ENCODE measurements at regions of chr1 and their contacts with region 1.

Region 1: DNA sequence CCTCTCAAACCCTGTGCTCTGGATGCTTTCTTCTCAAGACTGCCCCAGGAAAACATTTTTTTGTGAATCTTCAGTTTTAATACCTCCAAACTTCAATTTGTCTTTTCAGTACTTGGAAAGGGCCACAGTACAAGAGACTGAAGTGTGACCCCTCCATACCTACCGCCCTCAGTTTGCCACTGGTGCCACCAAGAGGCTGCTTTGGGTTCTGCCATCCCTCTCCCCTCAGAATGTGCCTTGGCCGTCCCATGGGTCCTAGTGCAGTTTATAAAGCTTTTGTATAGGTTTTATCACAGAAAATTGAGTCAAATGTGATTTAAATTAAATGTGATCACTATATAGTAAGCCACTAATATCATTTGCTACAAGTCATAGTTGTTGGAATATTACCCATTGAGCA is 60.8 kb upstream of the PGD start:
- DNase-seq: peak in 5 of 9 donors; percentile 1 to 27 (median 9)
- ATAC-seq: no peak
- H3K4me3 ChIP-seq: no peak overlapping the region
- H3K4me3 Mint-ChIP-seq: no peak overlapping the region
- H3K27ac ChIP-seq: no peak overlapping the region
- H3K27ac Mint-ChIP-seq: no peak overlapping the region
- H3K4me1 ChIP-seq: no peaks in the 10 kb centered on the region
- H3K4me1 Mint-ChIP-seq: no peaks in the 10 kb centered on the region
- H3K27me3 ChIP-seq: no peaks in the 10 kb centered on the region
- H3K27me3 Mint-ChIP-seq: no peaks in the 10 kb centered on the region

Region 2: DNA sequence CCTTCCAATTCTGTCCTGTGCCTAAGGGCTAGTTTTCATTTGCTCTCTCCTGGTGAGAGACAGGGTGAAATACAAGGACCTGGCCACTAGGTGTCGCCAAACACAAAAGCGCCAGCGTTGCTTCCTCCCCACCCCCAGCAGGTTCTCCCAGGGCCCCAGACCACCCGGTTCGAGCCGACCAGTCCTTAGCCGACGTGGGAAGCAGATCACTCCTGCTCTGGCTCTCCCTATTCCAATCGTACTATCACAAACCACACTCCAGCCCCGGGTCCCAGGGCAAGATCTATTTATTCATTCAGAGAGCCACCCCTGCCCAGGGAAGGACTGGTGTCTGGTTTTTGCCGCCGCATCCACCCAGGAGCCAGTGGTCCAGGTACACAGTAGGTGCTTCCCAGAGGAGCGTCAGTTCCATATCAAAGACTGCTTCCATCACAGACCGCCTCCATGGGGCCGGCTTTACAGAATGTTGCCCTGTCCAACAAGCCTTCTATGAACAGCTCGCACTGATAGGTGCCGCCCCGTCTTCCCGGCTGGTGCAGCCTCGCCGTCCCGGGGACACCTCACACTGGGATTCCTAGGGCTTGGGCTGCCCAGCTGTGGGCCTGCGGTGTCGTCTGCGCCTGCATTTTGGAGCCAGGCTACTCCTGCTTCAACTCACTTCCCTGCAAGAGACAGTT is 462.9 kb before region 1 on chr1:
- CTCF ChIA-PET with region 1: no interaction called
- POLR2A ChIA-PET with region 1: no interaction called
- intact Hi-C with region 1: loop called in 1 of 2 experiments (anchors 5 kb)
- DNase-seq: peak; percentile 54 to 73 (median 64)
- ATAC-seq: peak; percentile 93
- H3K4me3 ChIP-seq: no peak overlapping the region
- H3K4me3 Mint-ChIP-seq: peak overlapping the region in 1 of 10 donors; percentile 14
- H3K27ac ChIP-seq: no peak overlapping the region
- H3K27ac Mint-ChIP-seq: peak overlapping the region in 3 of 9 donors; percentile 16 to 23 (median 16)
- H3K4me1 ChIP-seq: no peaks in the 10 kb centered on the region
- H3K4me1 Mint-ChIP-seq: peaks cover 6 to 9% (median 7%) of the 10 kb centered on the region in 7 donors
- H3K27me3 ChIP-seq: no peaks in the 10 kb centered on the region
- H3K27me3 Mint-ChIP-seq: no peaks in the 10 kb centered on the region

Region 3: GRCh38 chr1:9957726-9958125 is 380.3 kb before region 1 on chr1:
- CTCF ChIA-PET with region 1: no interaction called
- POLR2A ChIA-PET with region 1: no interaction called
- intact Hi-C with region 1: loop called in 1 of 2 experiments (anchors 5 kb)
- DNase-seq: no peak
- ATAC-seq: no peak
- H3K4me3 ChIP-seq: no peak overlapping the region
- H3K4me3 Mint-ChIP-seq: no peak overlapping the region
- H3K27ac ChIP-seq: no peak overlapping the region
- H3K27ac Mint-ChIP-seq: no peak overlapping the region
- H3K4me1 ChIP-seq: no peaks in the 10 kb centered on the region
- H3K4me1 Mint-ChIP-seq: peaks cover 0 to 4% (median 0%) of the 10 kb centered on the region in 7 donors
- H3K27me3 ChIP-seq: no peaks in the 10 kb centered on the region
- H3K27me3 Mint-ChIP-seq: no peaks in the 10 kb centered on the region

Region 4: DNA sequence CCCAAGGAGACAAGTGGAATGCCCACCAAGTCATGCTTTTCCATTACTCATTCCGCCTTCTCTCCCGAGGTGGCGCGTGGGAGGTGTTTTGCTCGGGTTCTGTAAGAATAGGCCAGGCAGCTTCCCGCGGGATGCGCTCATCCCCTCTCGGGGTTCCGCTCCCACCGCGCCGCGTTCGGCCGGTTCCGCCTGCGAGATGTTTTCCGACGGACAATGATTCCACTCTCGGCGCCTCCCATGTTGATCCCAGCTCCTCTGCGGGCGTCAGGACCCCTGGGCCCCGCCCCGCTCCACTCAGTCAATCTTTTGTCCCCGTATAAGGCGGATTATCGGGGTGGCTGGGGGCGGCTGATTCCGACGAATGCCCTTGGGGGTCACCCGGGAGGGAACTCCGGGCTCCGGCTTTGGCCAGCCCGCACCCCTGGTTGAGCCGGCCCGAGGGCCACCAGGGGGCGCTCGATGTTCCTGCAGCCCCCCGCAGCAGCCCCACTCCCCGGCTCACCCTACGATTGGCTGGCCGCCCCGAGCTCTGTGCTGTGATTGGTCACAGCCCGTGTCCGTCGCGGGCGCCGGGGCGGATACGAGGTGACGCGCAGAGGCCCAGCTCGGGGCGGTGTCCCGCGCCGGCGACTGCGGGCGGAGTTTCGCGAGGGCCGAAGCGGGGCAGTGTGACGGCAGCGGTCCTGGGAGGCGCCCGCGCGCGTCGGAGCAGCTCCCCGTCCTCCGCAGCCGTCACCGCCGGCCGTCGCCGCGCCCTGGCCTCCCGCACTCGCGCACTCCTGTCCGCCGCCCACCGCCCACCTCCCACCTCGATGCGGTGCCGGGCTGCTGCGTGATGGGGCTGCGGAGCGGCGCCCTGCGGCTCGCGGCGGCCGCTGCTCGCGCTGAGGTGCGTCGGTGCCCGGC is 127.9 kb before region 1 on chr1 and contains the start of gene KIF1B:
- CTCF ChIA-PET with region 1: interaction called, 5 read pairs
- POLR2A ChIA-PET with region 1: no interaction called
- intact Hi-C with region 1: loop called in 1 of 2 experiments (anchors 1 kb)
- DNase-seq: peak; percentile 93 to 98 (median 95)
- ATAC-seq: peak; percentile 99
- H3K4me3 ChIP-seq: peak within 1 kb of the TSS; percentile 94
- H3K4me3 Mint-ChIP-seq: peak within 1 kb of the TSS; percentile 83 to 93 (median 90)
- H3K27ac ChIP-seq: peak within 1 kb of the TSS; percentile 75
- H3K27ac Mint-ChIP-seq: peak within 1 kb of the TSS; percentile 51 to 82 (median 67)
- H3K4me1 ChIP-seq: peaks cover 5 to 15% of the 10 kb centered on the region in 2 donors
- H3K4me1 Mint-ChIP-seq: peaks cover 14 to 37% (median 21%) of the 10 kb centered on the region in 7 donors
- H3K27me3 ChIP-seq: peaks cover 0 to 4% of the 10 kb centered on the region in 2 donors
- H3K27me3 Mint-ChIP-seq: peaks cover 0 to 8% (median 0%) of the 10 kb centered on the region in 5 donors
- total RNA-seq, gene KIF1B: 10.4 to 21.6 (median 13.4) TPM

Region 5: GRCh38 chr1:10374442-10374860 is 36.4 kb after region 1 on chr1:
- CTCF ChIA-PET with region 1: no interaction called
- POLR2A ChIA-PET with region 1: no interaction called
- intact Hi-C with region 1: no loop called
- DNase-seq: no peak
- ATAC-seq: no peak
- H3K4me3 ChIP-seq: no peak overlapping the region
- H3K4me3 Mint-ChIP-seq: no peak overlapping the region
- H3K27ac ChIP-seq: no peak overlapping the region
- H3K27ac Mint-ChIP-seq: no peak overlapping the region
- H3K4me1 ChIP-seq: no peaks in the 10 kb centered on the region
- H3K4me1 Mint-ChIP-seq: peaks cover 0 to 4% (median 0%) of the 10 kb centered on the region in 7 donors
- H3K27me3 ChIP-seq: no peaks in the 10 kb centered on the region
- H3K27me3 Mint-ChIP-seq: no peaks in the 10 kb centered on the region

Region 6: DNA sequence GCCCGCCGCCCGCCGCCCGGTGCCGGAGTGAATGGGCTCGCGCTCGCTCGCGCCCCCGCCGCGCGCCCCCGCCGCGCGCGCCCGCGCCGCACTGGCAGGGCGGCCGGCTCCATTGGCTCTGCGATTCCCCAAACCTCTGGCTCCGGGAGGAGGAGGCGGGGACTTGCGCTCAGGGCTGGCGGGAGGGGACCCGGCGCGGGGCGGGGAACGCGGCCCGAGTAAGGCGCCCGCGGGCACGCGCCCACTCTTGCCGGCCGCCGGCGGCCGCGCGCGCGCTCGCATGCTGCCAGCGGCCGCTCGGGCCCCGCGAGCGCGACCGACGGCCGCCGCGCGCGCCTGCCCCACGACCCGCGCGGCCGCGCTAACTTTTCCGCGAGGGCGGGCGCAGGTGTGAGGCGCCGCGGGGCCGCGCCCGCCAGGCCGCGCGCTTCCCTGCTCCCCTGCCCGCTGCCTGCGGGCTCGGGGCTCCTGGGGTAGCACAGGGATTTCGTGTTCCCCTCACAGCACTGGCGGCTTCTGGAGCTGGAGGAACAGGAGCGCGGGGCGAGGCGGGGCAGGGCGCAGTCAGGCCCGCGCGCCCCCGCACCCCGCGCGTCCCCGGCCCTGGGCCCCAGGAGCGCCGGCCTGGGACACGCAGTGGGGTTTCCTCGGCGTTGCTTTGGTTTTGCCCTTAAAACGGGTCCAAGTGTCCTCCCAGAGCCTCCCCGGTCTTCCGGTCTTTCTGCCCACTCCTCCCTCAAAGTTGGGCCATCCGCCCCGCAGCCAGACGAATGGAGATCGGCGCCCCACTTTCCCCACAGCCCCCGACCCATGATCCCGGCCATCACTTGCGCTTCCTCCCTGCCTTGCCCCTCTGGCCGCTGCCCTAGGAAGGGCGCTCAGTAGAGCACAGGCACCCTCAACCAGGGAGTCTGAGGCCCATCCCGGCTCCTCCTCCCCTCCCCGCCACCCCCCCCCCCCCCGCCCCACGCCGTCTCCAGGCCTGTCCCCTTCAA is 356.9 kb after region 1 on chr1:
- CTCF ChIA-PET with region 1: no interaction called
- POLR2A ChIA-PET with region 1: no interaction called
- intact Hi-C with region 1: no loop called
- DNase-seq: peak; percentile 60 to 82 (median 71)
- ATAC-seq: peak; percentile 81
- H3K4me3 ChIP-seq: peak overlapping the region; percentile 41
- H3K4me3 Mint-ChIP-seq: peak overlapping the region; percentile 74 to 87 (median 84)
- H3K27ac ChIP-seq: peak overlapping the region; percentile 58
- H3K27ac Mint-ChIP-seq: peak overlapping the region in 6 of 9 donors; percentile 71 to 92 (median 81)
- H3K4me1 ChIP-seq: peaks cover 10 to 15% of the 10 kb centered on the region in 2 donors
- H3K4me1 Mint-ChIP-seq: peaks cover 14 to 20% (median 16%) of the 10 kb centered on the region in 7 donors
- H3K27me3 ChIP-seq: no peaks in the 10 kb centered on the region
- H3K27me3 Mint-ChIP-seq: peaks cover 0 to 21% (median 0%) of the 10 kb centered on the region in 5 donors

Region 7: GRCh38 chr1:11078631-11079030 is 740.6 kb after region 1 on chr1:
- CTCF ChIA-PET with region 1: no interaction called
- POLR2A ChIA-PET with region 1: no interaction called
- intact Hi-C with region 1: no loop called
- DNase-seq: no peak
- ATAC-seq: no peak
- H3K4me3 ChIP-seq: no peak overlapping the region
- H3K4me3 Mint-ChIP-seq: no peak overlapping the region
- H3K27ac ChIP-seq: no peak overlapping the region
- H3K27ac Mint-ChIP-seq: peak overlapping the region in 2 of 9 donors; percentile 62 to 64
- H3K4me1 ChIP-seq: no peaks in the 10 kb centered on the region
- H3K4me1 Mint-ChIP-seq: peaks cover 0 to 4% (median 0%) of the 10 kb centered on the region in 7 donors
- H3K27me3 ChIP-seq: no peaks in the 10 kb centered on the region
- H3K27me3 Mint-ChIP-seq: no peaks in the 10 kb centered on the region